RWPE1 (cell line): ENCODE measurements at regions of chr2 and their contacts with region 1.

Region 1: DNA sequence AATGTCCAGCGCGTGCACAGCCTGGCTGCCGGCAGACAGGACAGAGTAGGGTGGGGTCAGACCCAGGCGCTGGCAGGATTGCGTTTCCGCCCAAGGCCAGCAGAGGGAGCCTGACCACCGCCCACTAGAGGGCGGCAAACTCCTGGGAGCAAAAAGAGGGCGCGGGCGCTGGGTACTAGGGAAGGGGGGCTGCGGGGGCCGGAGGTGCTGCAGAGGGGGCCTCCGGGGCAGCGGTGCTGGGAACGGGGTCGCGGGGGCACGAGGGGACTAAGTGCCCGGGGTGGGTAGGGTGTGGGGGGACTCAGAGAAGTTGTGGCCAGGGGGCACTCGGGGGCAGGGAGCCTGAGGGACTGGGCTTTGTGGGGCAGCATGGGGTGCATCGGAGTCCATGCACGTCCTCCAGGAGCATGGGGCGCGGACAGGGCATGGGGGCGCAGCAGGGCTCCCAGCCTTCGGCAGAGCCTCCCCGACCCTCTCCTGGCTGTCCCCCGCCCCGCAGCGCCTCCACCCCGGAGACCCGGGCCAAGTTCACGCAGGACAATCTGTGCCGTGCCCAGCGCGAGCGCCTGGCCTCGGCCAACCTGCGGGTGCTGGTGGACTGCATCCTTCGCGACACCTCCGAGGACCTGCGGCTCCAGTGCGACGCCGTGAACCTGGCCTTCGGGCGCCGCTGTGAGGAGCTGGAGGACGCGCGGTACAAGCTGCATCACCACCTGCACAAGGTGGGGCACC is 3.2 kb downstream of the TEKT4 start:
- DNase-seq: peak; percentile 75
- H3K27ac ChIP-seq: no peak overlapping the region
- CTCF ChIP-seq: peak; percentile 80

Region 2: DNA sequence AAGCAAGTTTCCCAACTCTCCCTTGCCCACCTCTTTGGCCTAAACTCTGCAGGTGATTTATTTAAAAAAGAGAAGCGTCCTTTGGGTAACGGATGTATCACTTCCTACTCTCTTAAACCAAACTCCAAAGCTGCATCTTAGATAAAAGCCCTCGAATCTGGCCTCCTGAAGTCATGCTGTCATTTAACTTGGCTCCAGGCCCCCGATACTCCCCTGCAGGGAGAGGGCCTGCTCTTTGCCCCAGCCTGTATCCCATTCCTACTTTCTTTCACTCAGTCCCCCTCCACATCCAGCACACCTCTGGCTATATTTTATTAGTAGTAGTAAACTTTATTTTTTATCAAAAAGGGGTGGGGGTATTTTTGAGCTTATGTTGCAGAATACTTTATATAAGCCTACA is 15.8 kb after region 1 on chr2:
- CTCF ChIA-PET with region 1: no interaction called
- POLR2A ChIA-PET with region 1: no interaction called
- DNase-seq: no peak
- H3K27ac ChIP-seq: no peak overlapping the region
- CTCF ChIP-seq: no peak

Region 3: DNA sequence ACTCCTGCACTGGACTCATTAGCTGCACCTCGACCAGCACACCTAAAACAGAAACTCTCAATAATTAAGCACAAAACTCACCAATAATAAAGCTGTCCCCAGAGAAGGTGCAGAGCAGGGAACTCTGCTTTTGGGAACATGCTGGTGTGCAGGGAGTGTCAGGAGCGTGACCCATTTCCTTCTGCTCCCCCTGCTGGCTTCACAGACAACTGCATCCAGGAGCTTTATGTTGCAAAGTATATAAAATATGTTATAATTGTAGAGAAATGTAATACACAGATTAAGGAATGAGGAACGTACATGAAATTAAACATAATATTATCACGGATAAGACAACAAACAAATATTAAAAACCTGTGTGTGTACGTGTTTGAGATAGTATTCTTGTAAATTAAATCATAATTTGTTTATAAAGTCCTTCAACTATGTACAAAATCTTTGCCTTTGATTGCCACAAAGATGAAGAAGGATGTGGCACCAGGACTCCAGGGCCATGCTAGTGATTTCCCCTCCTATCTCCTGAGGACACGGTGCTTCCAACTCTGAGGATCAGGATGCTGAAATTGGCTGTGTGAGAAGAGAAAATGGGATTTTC is 82.5 kb after region 1 on chr2:
- CTCF ChIA-PET with region 1: interaction called, 51 read pairs
- POLR2A ChIA-PET with region 1: no interaction called
- DNase-seq: peak; percentile 52
- H3K27ac ChIP-seq: no peak overlapping the region
- CTCF ChIP-seq: peak; percentile 91